ENCODE measurements at regions of chr17 and their contacts with region 1.

Region 1: DNA sequence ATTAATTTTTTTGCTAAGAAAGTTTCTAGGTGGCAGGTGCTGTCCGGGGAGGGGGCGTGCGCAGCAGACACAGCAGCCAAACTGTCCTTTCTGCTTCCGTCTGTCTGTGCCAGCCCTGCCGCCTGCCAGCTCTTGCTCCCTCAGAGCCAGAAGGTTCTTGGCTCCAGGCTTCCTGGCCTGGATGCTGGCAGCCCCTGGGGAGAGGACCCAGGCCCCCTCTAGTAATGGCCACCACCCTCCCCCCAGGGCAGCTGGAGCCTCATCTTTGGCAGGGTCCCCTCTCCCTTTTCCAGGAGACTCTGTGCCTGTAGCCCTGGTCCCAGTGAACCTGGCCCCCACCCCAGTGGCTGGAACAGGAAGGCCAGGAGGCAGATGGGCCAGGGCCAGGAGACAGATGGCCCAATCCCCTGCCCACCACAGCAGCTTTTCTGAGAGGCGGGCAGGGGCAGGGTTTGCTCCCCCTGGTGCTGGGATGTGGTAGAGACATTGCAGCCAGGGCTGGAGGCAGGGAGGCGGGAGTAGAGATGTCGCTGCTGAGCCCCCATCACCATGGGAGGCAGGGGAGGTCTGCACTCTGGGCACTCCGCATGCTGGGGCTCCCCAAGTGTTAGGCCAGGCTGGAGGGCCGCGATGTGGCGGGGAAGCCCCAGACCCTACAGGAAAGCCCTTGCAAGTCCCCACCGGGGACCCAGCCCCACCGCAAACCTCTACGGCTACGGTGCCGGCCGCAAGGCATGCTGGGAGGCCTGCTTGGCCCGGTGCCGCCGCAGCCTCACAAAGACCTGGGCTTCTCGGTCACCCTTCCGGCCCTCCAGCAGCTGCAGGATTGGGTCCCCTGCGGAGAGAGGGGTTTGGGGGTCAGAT is 16.7 kb downstream of the UNC13D start:
- DNase-seq: no peak
- ATAC-seq: peak; percentile 84
- H3K4me3 ChIP-seq: no peak overlapping the region
- H3K27ac ChIP-seq: peak overlapping the region; percentile 27; the same call in 1 of the 2 replicates
- H3K4me1 ChIP-seq: peaks cover 6 to 8% of the 10 kb centered on the region in 2 experiments; a peak in 2 of 4 replicates
- H3K27me3 ChIP-seq: no peaks in the 10 kb centered on the region
- CTCF ChIP-seq: peak; percentile 70 to 91 (median 87)
- POLR2A ChIP-seq: no peak
- RAD21 ChIP-seq: peak; percentile 57

Region 2: DNA sequence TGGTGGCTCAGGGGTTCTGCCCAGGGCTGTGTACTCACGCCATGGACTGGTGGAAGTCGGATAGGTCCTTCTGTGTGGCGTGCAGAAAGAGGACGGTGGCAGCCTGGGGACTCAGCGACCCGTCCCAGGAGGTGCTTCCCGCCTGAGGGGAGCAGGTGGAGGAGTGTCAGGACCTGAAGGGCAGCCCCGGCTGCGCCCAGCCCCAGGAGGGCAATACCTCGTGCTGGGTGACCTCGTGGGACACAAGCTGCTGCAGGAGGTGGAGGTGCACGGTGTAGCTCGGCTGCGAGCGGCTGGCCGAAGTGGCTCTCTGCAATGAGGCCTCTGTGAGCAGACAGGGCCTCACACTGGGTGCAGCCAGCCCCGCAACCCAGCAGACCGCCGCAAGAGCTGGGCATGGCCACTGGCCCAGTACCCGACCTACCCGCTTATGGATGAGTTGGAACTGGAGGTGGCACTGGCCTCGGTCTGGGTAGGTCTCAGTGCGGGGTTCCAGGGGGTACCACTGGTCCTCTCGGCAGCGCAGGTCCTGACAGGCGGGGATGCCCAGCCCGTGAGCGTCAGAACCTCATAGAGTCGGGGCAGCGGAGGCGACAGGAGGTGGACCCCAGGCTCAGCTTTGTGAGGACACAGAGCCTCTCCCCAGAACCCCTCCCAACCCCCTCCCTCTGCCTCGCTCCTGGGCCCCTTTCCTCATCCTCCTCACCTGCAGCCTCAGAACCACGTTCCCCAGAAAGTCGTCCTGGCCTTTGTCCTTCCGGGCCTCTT is 12.5 kb after region 1 on chr17:
- CTCF ChIA-PET with region 1: interaction called, 15 read pairs
- POLR2A ChIA-PET with region 1: interaction called, 5 read pairs
- RAD21 ChIA-PET with region 1: no interaction called
- intact Hi-C with region 1: no loop called
- DNase-seq: no peak
- ATAC-seq: no peak
- H3K4me3 ChIP-seq: no peak overlapping the region
- H3K27ac ChIP-seq: no peak overlapping the region
- H3K4me1 ChIP-seq: peaks cover 11 to 27% of the 10 kb centered on the region in 2 experiments
- H3K27me3 ChIP-seq: no peaks in the 10 kb centered on the region
- CTCF ChIP-seq: no peak
- POLR2A ChIP-seq: no peak
- RAD21 ChIP-seq: no peak

Measured in HCT116 (cell line).